K562 (cell line): ENCODE measurements at regions of chr2 and their contacts with region 1.

Region 1: DNA sequence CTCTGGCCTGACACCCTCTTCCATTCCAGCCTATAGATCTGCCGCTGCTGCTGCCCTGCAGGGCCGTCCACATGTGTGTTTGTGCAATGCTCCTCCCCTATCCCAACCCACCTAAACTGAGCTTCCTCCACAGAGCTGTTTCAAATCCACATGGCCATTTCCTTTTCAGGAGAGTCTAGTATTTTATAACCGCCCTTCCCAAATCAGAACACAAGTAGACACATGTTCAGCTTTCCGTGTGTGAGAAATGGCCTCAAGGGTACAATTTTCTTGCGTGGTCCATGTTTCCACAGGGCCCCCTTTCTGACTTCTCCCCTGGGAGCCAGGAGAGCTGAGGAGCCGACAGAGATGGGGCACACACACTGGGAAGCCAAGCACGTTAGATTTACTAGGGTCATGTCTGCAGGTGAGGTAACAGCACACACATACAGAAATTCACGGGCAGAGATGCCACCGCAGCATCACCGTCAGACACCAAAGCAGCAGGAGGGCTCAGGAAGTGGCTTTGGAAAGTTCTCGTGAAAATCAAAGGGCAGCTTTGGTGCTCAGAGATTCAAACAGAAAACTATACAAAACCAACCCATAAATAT is 102.9 kb upstream of the TGFA start:
- DNase-seq: no peak
- ATAC-seq: no peak
- H3K4me3 ChIP-seq: no peak overlapping the region
- H3K27ac ChIP-seq: no peak overlapping the region
- H3K4me1 ChIP-seq: no peaks in the 10 kb centered on the region; a peak in 1 of 5 replicates
- H3K27me3 ChIP-seq: no peaks in the 10 kb centered on the region; a peak in 1 of 5 replicates
- CTCF ChIP-seq: no peak
- EP300 ChIP-seq: no peak
- POLR2A ChIP-seq: no peak
- RAD21 ChIP-seq: no peak

Region 2: GRCh38 chr2:70767699-70768589 is 111.4 kb after region 1 on chr2 and contains the start of gene ADD2:
- CTCF ChIA-PET with region 1: interaction called, 18 read pairs
- POLR2A ChIA-PET with region 1: interaction called, 4 read pairs
- in situ Hi-C with region 1: no loop called
- intact Hi-C with region 1: no loop called
- DNase-seq: peak; percentile 78 to 87 (median 85)
- ATAC-seq: peak; percentile 95
- H3K4me3 ChIP-seq: peak within 1 kb of the TSS; percentile 73
- H3K27ac ChIP-seq: peak within 1 kb of the TSS; percentile 65
- H3K4me1 ChIP-seq: peaks cover 2 to 12% of the 10 kb centered on the region in 2 experiments; a peak in 4 of 5 replicates
- H3K27me3 ChIP-seq: no peaks in the 10 kb centered on the region; a peak in 1 of 5 replicates
- CTCF ChIP-seq: peak; percentile 55 to 96 (median 84)
- EP300 ChIP-seq: no peak
- POLR2A ChIP-seq: peak; percentile 61; the same call in 1 of the 2 replicates
- RAD21 ChIP-seq: peak; percentile 21 to 64; a peak in 3 of 4 replicates
- polyA plus RNA-seq, gene ADD2: 3.5 to 4.0 TPM

Region 3: DNA sequence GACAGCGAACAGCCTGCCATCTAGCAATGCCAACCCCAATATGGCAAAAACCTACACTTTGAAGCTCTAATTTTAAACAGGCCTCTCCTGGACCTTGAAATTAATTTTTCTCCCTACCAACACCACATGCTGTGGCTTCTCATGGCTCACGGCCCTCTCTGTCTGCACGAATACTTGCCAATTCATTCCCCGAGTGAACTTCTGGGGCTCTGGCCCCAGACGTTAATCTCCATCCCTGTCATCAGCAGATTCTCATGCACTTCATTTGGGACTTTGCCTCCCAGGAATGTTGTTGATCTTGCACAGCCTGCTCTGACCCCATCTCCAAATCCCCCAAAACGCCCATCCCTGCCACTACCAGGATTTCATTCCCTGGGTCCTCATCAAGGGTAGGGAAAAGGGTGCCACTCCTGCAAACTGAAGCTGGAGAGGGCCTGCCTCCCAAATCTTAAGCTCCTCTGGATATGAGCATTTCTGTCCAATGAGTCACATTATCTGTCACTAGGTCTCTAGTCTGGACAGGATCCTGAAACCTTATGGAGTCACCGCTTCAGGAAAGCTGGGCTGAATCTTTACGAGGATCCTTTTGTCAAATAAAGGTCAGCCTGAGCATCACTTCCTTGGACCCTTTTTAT is 123.5 kb after region 1 on chr2:
- CTCF ChIA-PET with region 1: interaction called, 20 read pairs
- POLR2A ChIA-PET with region 1: interaction called, 3 read pairs
- in situ Hi-C with region 1: loop called (anchors 5 kb)
- intact Hi-C with region 1: loop called (anchors 1 kb)
- DNase-seq: no peak
- ATAC-seq: no peak
- H3K4me3 ChIP-seq: no peak overlapping the region
- H3K27ac ChIP-seq: no peak overlapping the region
- H3K4me1 ChIP-seq: peaks cover 0 to 8% of the 10 kb centered on the region in 2 experiments; a peak in 3 of 5 replicates
- H3K27me3 ChIP-seq: no peaks in the 10 kb centered on the region
- CTCF ChIP-seq: no peak
- EP300 ChIP-seq: no peak
- POLR2A ChIP-seq: no peak
- RAD21 ChIP-seq: no peak

Region 4: GRCh38 chr2:70789304-70790135 is 133.0 kb after region 1 on chr2:
- CTCF ChIA-PET with region 1: interaction called, 20 read pairs
- POLR2A ChIA-PET with region 1: interaction called, 4 read pairs
- in situ Hi-C with region 1: loop called (anchors 5 kb)
- intact Hi-C with region 1: loop called (anchors 1 kb)
- DNase-seq: peak; percentile 52 to 78 (median 62)
- ATAC-seq: peak; percentile 90
- H3K4me3 ChIP-seq: no peak overlapping the region
- H3K27ac ChIP-seq: no peak overlapping the region
- H3K4me1 ChIP-seq: peaks cover 0 to 10% of the 10 kb centered on the region in 2 experiments; a peak in 3 of 5 replicates
- H3K27me3 ChIP-seq: peaks cover 6 to 16% of the 10 kb centered on the region in 2 experiments
- CTCF ChIP-seq: peak; percentile 86 to 87 (median 86)
- EP300 ChIP-seq: no peak
- POLR2A ChIP-seq: no peak
- RAD21 ChIP-seq: peak; percentile 53 to 77